Activated CD4-positive, alpha-beta T cell treated with anti-CD3 and anti-CD28 coated beads, Interleukin-2, amount 10 ng/mL, durations not matched to agents 7 days and 5 days (primary cell): ENCODE measurements at regions of chr15 and their contacts with region 1.

Region 1: DNA sequence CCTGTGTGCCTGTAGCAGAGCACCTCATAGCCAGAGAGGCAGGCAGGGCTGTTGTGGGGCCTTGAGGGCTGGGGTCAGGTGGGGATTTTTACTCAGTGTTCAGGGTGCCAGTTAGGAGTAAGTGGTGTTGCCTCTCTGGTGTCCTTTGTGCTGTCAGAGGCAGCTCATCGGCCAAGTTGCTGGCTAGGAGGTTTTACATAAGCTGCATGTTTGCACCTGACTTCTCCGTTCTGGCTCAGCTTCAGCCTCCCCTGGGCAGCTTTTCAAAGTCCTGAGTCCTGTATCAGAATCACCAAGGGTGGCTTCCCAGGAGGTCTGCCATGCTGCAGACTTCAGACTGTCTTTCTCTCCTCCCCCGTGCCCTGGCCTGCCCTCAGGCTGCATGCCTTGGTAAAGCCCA is 242.6 kb upstream of the TPM1 start:
- DNase-seq: no peak
- H3K4me3 Mint-ChIP-seq: no peak overlapping the region
- H3K27ac Mint-ChIP-seq: no peak overlapping the region
- H3K4me1 Mint-ChIP-seq: no peaks in the 10 kb centered on the region
- H3K27me3 Mint-ChIP-seq: peaks cover 13% of the 10 kb centered on the region

Region 2: DNA sequence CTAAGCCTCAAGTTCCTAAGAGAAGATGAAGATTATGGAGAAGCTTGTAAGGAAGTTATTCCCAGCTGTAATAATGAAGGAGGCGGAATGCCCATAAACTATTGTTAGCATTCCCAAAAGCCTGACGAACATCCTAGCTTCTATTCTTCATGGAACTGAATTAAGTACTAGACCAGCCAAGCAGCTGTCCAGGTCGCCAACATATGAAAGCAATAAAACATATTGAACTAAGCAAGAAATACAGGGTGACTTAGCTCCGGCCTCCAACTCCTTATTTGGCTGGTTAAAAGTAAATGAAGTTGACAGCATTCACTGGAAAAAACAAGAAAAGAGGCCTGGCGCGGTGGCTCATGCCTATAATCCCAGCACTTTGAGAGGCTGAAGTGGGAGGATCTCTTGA is 68.6 kb after region 1 on chr15:
- CTCF ChIA-PET with region 1: no interaction called
- POLR2A ChIA-PET with region 1: interaction called, 12 read pairs
- DNase-seq: no peak
- H3K4me3 Mint-ChIP-seq: no peak overlapping the region
- H3K27ac Mint-ChIP-seq: no peak overlapping the region
- H3K4me1 Mint-ChIP-seq: no peaks in the 10 kb centered on the region
- H3K27me3 Mint-ChIP-seq: peaks cover 3% of the 10 kb centered on the region